Calu3 (cell line): ENCODE measurements at regions of chr10 and their contacts with region 1.

Region 1: DNA sequence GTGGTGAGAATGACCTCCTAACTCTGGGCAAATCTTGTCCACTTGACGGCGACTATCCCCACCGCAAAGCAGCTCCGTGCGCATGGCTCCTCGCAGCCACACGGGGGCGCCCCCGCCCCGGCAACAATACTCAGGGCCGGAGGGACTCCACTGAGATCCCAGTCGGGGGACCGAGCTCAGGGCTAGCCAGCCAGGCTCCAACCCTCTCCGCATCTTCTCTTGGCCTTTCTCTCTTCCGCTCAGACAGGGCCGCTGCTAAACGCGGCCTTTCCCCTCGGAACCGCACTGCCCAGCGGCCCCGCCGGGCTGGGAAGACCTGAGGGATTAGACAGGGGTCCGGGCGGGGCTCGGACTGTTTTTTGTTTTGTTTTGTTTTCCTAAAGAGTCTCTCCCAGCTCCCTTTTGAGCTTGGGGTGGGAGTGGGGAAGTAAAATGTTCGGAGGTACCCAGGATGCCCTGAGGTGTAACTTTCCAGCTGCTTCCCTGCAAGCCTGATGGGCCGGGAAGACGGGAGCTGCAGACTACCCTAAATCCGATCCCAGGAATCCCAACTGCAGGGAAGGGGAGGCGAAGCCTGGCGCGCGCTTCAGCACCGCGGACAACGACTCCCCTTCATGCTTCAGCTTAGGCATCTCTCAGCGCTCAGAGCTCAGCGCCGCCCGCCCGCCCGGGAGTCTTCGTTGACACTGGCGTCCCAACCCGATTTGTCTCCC is 2.7 kb downstream of the KCNIP2 start:
- DNase-seq: peak; percentile 81
- H3K4me3 Mint-ChIP-seq: peak overlapping the region; percentile 66
- H3K27ac Mint-ChIP-seq: peak overlapping the region; percentile 59
- H3K4me1 Mint-ChIP-seq: peaks cover 8% of the 10 kb centered on the region
- H3K27me3 Mint-ChIP-seq: no peaks in the 10 kb centered on the region
- CTCF ChIP-seq: peak; percentile 71

Region 2: DNA sequence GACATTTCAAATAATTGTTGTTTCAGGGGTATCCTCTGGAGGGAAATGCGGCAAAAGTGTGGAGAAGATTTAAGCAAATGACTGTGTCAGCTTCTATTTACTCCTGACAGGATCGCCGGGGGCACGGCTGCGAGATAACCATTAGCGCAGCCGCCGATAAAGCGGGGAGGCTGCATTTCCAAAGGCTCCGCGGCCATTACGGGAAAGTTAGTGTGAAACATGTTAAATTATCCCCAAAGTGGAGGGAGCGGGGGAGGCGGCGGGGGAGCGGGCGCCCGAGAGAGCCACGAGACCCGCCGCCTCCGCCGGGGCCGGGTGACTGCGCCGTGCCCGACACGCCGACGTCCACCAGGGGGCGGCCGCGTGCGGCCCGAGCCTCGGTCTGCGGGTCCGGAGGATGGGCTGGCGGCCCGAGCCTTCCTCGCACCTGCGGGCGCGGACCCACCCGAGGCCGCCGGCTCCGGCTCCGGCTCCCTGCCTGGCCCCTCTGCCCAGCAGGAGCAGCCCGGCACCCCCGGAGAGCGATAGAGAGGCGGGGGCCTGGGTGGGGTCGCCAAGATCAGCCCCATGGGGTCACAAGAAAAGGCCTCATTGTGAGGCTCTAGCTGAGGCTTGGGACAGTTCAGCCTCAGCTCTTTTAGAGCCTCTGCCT is 1169.9 kb before region 1 on chr10:
- CTCF ChIA-PET with region 1: no interaction called
- intact Hi-C with region 1: no loop called
- DNase-seq: peak; percentile 63
- H3K4me3 Mint-ChIP-seq: no peak overlapping the region
- H3K27ac Mint-ChIP-seq: no peak overlapping the region
- H3K4me1 Mint-ChIP-seq: no peaks in the 10 kb centered on the region
- H3K27me3 Mint-ChIP-seq: peaks cover 69% of the 10 kb centered on the region
- CTCF ChIP-seq: peak; percentile 72

Region 3: DNA sequence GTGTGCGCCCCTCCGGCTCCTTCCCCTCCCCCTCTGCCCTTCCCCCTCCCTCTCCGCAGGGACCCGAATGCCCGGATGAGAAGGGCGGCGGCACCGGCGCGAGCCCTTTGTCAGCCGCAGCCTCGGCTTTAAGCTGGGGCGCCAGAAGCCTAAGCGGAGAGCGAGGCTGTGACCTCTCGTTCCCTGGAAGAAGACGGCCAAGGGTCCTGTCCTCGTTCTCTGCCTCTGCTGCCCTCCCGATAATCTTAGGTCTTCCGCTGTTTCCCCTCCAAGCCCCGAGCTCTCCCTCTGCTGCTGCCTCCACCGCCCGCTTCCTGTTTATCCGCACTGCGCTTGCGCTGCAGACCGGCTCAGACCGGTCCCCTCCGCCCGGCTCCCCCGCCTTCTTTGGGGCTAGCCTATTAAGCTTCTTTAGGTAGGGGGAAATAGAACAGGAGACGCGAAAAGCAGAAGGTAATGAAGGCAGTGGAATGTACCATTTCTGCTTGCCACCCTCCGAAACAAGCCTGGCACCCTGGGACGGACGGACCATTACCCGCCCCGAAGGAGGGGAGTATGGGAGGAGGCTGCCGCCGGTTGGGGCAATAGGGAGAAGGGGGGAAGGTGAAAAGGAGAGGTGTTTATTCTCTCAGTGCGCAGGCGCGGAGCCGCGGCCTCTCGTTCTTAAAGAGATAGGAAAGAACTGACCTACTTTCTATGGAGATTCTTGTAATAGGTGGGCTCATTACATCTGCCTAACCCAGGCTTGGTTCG is 22.6 kb before region 1 on chr10 and contains the start of gene OGA:
- CTCF ChIA-PET with region 1: interaction called, 22 read pairs
- intact Hi-C with region 1: no loop called
- DNase-seq: peak; percentile 94
- H3K4me3 Mint-ChIP-seq: peak within 1 kb of the TSS; percentile 90
- H3K27ac Mint-ChIP-seq: peak within 1 kb of the TSS; percentile 89
- H3K4me1 Mint-ChIP-seq: peaks cover 7% of the 10 kb centered on the region
- H3K27me3 Mint-ChIP-seq: no peaks in the 10 kb centered on the region
- CTCF ChIP-seq: no peak
- total RNA-seq, gene OGA: 59.0 and 63.3 TPM in 2 replicates

Region 4: DNA sequence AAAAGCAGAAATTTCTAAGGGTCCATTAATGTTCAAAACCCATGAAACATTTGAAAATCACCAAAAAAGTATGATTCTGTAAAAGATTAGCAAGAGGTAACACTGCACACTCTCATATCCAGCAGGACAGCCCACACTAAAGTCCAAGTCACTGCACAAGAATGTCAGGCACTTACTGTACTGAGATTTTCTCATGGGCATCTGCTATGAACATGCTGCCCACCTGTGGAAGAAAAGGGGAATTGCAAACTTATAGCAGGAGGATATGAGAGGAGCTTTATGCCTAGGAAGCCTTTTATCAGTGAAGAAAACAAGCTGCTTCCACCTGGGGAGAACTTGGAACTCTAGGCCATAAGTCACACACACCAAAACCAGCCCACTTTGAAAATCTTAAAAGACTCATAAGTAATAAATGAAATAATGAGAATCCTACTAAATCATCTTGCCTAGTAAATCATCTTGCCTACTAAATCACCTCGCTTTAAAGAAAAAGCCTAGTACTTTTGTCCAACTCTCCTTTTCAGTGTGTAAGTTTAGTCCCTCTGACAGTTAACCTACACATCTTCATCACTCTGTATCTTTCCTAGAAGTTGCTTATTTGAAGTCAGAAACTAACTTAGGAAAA is 169.0 kb after region 1 on chr10:
- CTCF ChIA-PET with region 1: interaction called, 47 read pairs
- intact Hi-C with region 1: loop called (anchors 1 kb)
- DNase-seq: peak; percentile 45
- H3K4me3 Mint-ChIP-seq: no peak overlapping the region
- H3K27ac Mint-ChIP-seq: peak overlapping the region; percentile 23
- H3K4me1 Mint-ChIP-seq: peaks cover 18% of the 10 kb centered on the region
- H3K27me3 Mint-ChIP-seq: no peaks in the 10 kb centered on the region
- CTCF ChIP-seq: peak; percentile 50

Region 5: GRCh38 chr10:102072673-102073527 is 232.0 kb after region 1 on chr10:
- CTCF ChIA-PET with region 1: interaction called, 4 read pairs
- intact Hi-C with region 1: loop called (anchors 2 kb)
- DNase-seq: peak; percentile 80
- H3K4me3 Mint-ChIP-seq: no peak overlapping the region
- H3K27ac Mint-ChIP-seq: no peak overlapping the region
- H3K4me1 Mint-ChIP-seq: peaks cover 12% of the 10 kb centered on the region
- H3K27me3 Mint-ChIP-seq: peaks cover 24% of the 10 kb centered on the region
- CTCF ChIP-seq: peak; percentile 79